A673 (cell line): ENCODE measurements at regions of chr6 and their contacts with region 1.

Region 1: GRCh38 chr6:28643017-28643740 is 117.5 kb downstream of the GPX5 start:
- DNase-seq: peak; percentile 91
- H3K4me3 ChIP-seq: no peak overlapping the region
- H3K27ac ChIP-seq: no peak overlapping the region
- H3K4me1 ChIP-seq: no peaks in the 10 kb centered on the region
- H3K27me3 ChIP-seq: no peaks in the 10 kb centered on the region
- CTCF ChIP-seq: no peak

Region 2: GRCh38 chr6:28657769-28658465 is 14.7 kb after region 1 on chr6:
- CTCF ChIA-PET with region 1: no interaction called
- POLR2A ChIA-PET with region 1: interaction called, 13 read pairs
- intact Hi-C with region 1: no loop called
- DNase-seq: peak; percentile 81
- H3K4me3 ChIP-seq: peak overlapping the region; percentile 57
- H3K27ac ChIP-seq: no peak overlapping the region
- H3K4me1 ChIP-seq: no peaks in the 10 kb centered on the region
- H3K27me3 ChIP-seq: no peaks in the 10 kb centered on the region
- CTCF ChIP-seq: no peak